ENCODE measurements at regions of chr22 and their contacts with region 1.

Region 1: GRCh38 chr22:17115945-17116565 is 5.1 kb downstream of the TMEM121B start:
- H3K4me3 ChIP-seq: no peak overlapping the region
- H3K27ac ChIP-seq: no peak overlapping the region
- H3K4me1 ChIP-seq: no peaks in the 10 kb centered on the region
- CTCF ChIP-seq: no peak

Region 2: DNA sequence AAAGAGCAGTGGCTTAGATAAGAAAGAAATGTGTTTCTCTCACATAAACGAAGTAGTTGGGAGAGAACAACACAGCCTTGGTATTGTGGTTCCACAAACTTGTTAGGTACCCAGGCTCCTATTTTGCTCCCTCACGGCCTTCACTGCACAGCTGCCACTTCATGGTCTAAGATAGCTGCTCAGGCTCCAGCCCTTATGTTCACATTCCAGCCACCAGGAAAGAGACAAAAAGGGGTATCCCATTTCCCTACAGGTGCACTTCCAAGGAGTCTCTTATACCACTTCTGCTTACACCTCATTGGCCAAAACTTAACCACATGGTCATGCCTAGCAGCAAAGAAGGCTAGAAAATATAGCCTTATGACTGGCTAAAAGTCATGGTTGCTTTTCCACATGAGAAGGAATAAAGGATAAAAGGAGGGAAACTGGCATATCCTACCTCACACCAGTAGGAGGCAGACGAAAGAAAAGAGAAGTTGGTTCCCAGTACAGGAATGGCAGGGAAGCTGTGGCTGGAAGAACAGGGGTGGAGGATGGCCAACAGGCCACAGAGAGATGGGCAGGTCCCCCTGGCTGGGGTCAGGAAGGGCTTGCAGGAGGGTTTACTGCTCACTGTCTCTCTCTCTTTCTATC is 48.5 kb after region 1 on chr22:
- CTCF ChIA-PET with region 1: interaction called, 11 read pairs
- POLR2A ChIA-PET with region 1: no interaction called
- H3K4me3 ChIP-seq: no peak overlapping the region
- H3K27ac ChIP-seq: no peak overlapping the region
- H3K4me1 ChIP-seq: no peaks in the 10 kb centered on the region
- CTCF ChIP-seq: no peak

Measured in HEK293 (cell line).